ENCODE measurements at regions of chr11 and their contacts with region 1.

Region 1: GRCh38 chr11:88016392-88017170 is 158.7 kb downstream of the RAB38 start:
- DNase-seq: peak; percentile 27
- ATAC-seq: peak; percentile 98
- H3K4me3 ChIP-seq: no peak overlapping the region
- H3K27ac ChIP-seq: no peak overlapping the region
- H3K4me1 ChIP-seq: no peaks in the 10 kb centered on the region
- H3K27me3 ChIP-seq: no peaks in the 10 kb centered on the region; a peak in 1 of 4 replicates
- CTCF ChIP-seq: peak; percentile 72 to 88 (median 76); a peak in 5 of 6 replicates
- EP300 ChIP-seq: no peak
- POLR2A ChIP-seq: no peak
- RAD21 ChIP-seq: peak; percentile 96

Region 2: GRCh38 chr11:87972133-87972532 is 44.4 kb before region 1 on chr11:
- CTCF ChIA-PET with region 1: interaction called, 19 read pairs
- POLR2A ChIA-PET with region 1: no interaction called
- RAD21 ChIA-PET with region 1: interaction called, 9 read pairs
- SMC1A ChIA-PET with region 1: interaction called, 8 read pairs
- in situ Hi-C with region 1: no loop called
- intact Hi-C with region 1: no loop called
- DNase-seq: no peak
- ATAC-seq: peak; percentile 90
- H3K4me3 ChIP-seq: no peak overlapping the region
- H3K27ac ChIP-seq: no peak overlapping the region
- H3K4me1 ChIP-seq: no peaks in the 10 kb centered on the region; the same call in 1 of the 2 replicates
- H3K27me3 ChIP-seq: 0 out of 4 replicates have a peak, but pooled peaks cover 0 to 2% of the 10 kb centered on the region in 2 experiments
- CTCF ChIP-seq: no peak
- EP300 ChIP-seq: no peak
- POLR2A ChIP-seq: no peak
- RAD21 ChIP-seq: no peak

Region 3: GRCh38 chr11:88035271-88035670 is 18.7 kb after region 1 on chr11:
- CTCF ChIA-PET with region 1: no interaction called
- POLR2A ChIA-PET with region 1: no interaction called
- RAD21 ChIA-PET with region 1: no interaction called
- SMC1A ChIA-PET with region 1: no interaction called
- in situ Hi-C with region 1: no loop called
- intact Hi-C with region 1: no loop called
- DNase-seq: no peak
- ATAC-seq: no peak
- H3K4me3 ChIP-seq: no peak overlapping the region
- H3K27ac ChIP-seq: no peak overlapping the region
- H3K4me1 ChIP-seq: no peaks in the 10 kb centered on the region
- H3K27me3 ChIP-seq: no peaks in the 10 kb centered on the region; a peak in 1 of 4 replicates
- CTCF ChIP-seq: no peak
- EP300 ChIP-seq: no peak
- POLR2A ChIP-seq: no peak
- RAD21 ChIP-seq: no peak

Region 4: DNA sequence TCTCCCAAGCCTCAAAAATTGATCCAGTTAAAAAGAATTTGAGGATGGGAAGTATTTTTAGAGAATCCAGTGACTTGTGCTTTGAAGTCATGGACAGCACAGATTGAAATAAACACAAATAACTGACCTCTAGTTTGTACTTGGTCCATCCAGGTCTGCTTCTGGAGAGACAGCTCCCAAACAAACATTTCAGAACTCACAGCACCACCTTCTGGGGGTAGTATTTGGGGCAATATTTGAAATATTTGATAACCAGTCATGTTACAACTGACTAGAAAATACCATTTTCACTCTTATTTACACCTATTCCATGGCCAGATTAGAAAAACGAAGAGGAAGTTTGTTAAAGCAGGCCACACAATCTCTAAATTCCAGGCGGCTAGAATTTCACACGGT is 264.7 kb after region 1 on chr11:
- CTCF ChIA-PET with region 1: interaction called, 23 read pairs
- POLR2A ChIA-PET with region 1: no interaction called
- RAD21 ChIA-PET with region 1: interaction called, 6 read pairs
- SMC1A ChIA-PET with region 1: interaction called, 13 read pairs
- in situ Hi-C with region 1: no loop called
- intact Hi-C with region 1: loop called (anchors 1 kb)
- DNase-seq: no peak
- ATAC-seq: peak; percentile 48; the same call in 2 of the 3 replicates
- H3K4me3 ChIP-seq: no peak overlapping the region
- H3K27ac ChIP-seq: no peak overlapping the region
- H3K4me1 ChIP-seq: no peaks in the 10 kb centered on the region
- H3K27me3 ChIP-seq: no peaks in the 10 kb centered on the region
- CTCF ChIP-seq: peak in 2 of 3 experiments; percentile 31 to 39; a peak in 2 of 6 replicates
- EP300 ChIP-seq: no peak
- POLR2A ChIP-seq: no peak
- RAD21 ChIP-seq: peak; percentile 43

Region 5: GRCh38 chr11:88535916-88536547 is 519.5 kb after region 1 on chr11:
- CTCF ChIA-PET with region 1: interaction called, 107 read pairs
- POLR2A ChIA-PET with region 1: no interaction called
- RAD21 ChIA-PET with region 1: interaction called, 46 read pairs
- SMC1A ChIA-PET with region 1: interaction called, 60 read pairs
- in situ Hi-C with region 1: loop called (anchors 25 kb)
- intact Hi-C with region 1: no loop called
- DNase-seq: no peak
- ATAC-seq: peak; percentile 99
- H3K4me3 ChIP-seq: no peak overlapping the region
- H3K27ac ChIP-seq: no peak overlapping the region
- H3K4me1 ChIP-seq: no peaks in the 10 kb centered on the region
- H3K27me3 ChIP-seq: no peaks in the 10 kb centered on the region
- CTCF ChIP-seq: no peak
- EP300 ChIP-seq: peak in 1 of 2 experiments; percentile 36; a peak in 1 of 4 replicates
- POLR2A ChIP-seq: no peak
- RAD21 ChIP-seq: no peak

Region 6: GRCh38 chr11:88552377-88553062 is 535.9 kb after region 1 on chr11:
- CTCF ChIA-PET with region 1: interaction called, 107 read pairs
- POLR2A ChIA-PET with region 1: no interaction called
- RAD21 ChIA-PET with region 1: interaction called, 42 read pairs
- SMC1A ChIA-PET with region 1: interaction called, 28 read pairs
- in situ Hi-C with region 1: loop called (anchors 25 kb)
- intact Hi-C with region 1: loop called (anchors 2 kb)
- DNase-seq: peak; percentile 12
- ATAC-seq: peak; percentile 100
- H3K4me3 ChIP-seq: no peak overlapping the region
- H3K27ac ChIP-seq: no peak overlapping the region
- H3K4me1 ChIP-seq: no peaks in the 10 kb centered on the region
- H3K27me3 ChIP-seq: peaks cover 0 to 10% of the 10 kb centered on the region in 2 experiments; a peak in 2 of 4 replicates
- CTCF ChIP-seq: peak; percentile 84 to 93 (median 91)
- EP300 ChIP-seq: no peak
- POLR2A ChIP-seq: no peak
- RAD21 ChIP-seq: peak; percentile 86

Region 7: DNA sequence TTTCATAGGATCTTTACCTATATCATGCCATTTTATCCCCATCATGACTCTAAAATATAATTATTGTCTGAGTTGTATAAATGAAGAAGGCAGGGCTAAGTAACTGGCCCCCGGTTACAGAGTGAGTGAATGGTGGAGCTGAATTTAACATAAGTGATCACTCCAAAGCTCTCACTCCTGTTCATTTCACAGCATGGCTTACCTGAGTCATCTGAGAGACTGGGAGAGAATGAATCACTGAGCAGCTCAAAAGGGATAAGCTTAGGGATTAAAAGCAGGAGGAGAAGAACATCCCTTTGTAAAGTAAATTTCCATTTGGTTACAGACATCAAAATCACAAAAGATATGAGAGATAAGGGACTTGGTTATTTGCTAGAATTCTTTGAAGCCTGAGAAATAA is 614.9 kb after region 1 on chr11:
- CTCF ChIA-PET with region 1: no interaction called
- POLR2A ChIA-PET with region 1: no interaction called
- RAD21 ChIA-PET with region 1: no interaction called
- SMC1A ChIA-PET with region 1: no interaction called
- in situ Hi-C with region 1: no loop called
- intact Hi-C with region 1: no loop called
- DNase-seq: no peak
- ATAC-seq: no peak
- H3K4me3 ChIP-seq: no peak overlapping the region
- H3K27ac ChIP-seq: no peak overlapping the region
- H3K4me1 ChIP-seq: no peaks in the 10 kb centered on the region
- H3K27me3 ChIP-seq: no peaks in the 10 kb centered on the region
- CTCF ChIP-seq: no peak
- EP300 ChIP-seq: no peak
- POLR2A ChIP-seq: no peak
- RAD21 ChIP-seq: no peak

Region 8: GRCh38 chr11:88886796-88887195 is 870.2 kb after region 1 on chr11:
- CTCF ChIA-PET with region 1: interaction called, 13 read pairs
- POLR2A ChIA-PET with region 1: no interaction called
- RAD21 ChIA-PET with region 1: interaction called, 3 read pairs
- SMC1A ChIA-PET with region 1: interaction called, 8 read pairs
- in situ Hi-C with region 1: loop called (anchors 25 kb)
- intact Hi-C with region 1: no loop called
- DNase-seq: peak; percentile 11
- ATAC-seq: peak; percentile 98
- H3K4me3 ChIP-seq: no peak overlapping the region
- H3K27ac ChIP-seq: no peak overlapping the region
- H3K4me1 ChIP-seq: no peaks in the 10 kb centered on the region
- H3K27me3 ChIP-seq: no peaks in the 10 kb centered on the region
- CTCF ChIP-seq: peak; percentile 62 to 64 (median 62); a peak in 5 of 6 replicates
- EP300 ChIP-seq: no peak
- POLR2A ChIP-seq: no peak
- RAD21 ChIP-seq: peak; percentile 80

Measured in GM12878 (cell line).